Gastrocnemius medialis (tissue), 4 donors: ENCODE measurements at regions of chr11 and their contacts with region 1.

Region 1: DNA sequence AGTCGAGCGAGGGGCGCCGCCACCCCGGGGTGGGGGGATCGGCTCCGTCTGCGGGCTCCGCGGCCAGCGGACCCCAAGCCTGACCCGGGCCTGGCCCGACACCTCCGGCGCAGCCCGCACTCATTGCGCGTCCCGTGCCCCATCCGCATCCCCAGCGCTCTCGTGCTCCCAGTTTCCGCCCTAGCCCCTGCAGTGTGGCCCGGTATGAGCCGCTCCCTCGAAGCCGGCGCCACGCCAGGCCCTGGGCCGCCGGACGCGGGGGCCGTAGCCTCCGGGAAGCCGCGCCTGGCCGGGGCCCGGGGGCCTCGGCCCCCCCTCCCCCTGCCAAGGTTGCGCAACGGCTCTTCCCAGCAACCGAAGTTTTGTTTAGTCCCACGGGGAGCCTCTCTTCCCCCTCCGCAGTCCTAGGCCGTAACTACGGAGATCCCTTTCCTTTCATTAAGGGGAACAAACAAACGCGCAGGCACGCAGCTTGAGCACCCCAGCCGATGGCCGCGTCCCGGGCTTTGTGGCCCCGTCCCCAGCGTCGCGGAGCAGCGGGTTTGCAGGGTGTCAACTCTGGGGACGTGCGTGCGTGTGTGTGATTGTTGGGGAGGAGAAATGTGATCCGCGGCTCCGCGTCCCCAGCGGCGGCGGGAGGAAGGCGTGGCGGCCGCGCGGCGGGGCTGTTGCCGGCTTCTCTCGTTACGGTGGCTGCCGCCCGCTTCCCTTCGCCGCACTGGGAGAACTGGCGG is 883 bp downstream of the HIPK3 start:
- DNase-seq: peak; percentile 74 to 86
- ATAC-seq: peak; percentile 71 to 73
- H3K4me3 ChIP-seq: peak overlapping the region; percentile 70 to 96 (median 90)
- H3K27ac ChIP-seq: peak overlapping the region; percentile 97 to 100 (median 100)
- H3K4me1 ChIP-seq: peaks cover 33 to 36% of the 10 kb centered on the region in 2 donors
- H3K27me3 ChIP-seq: no peaks in the 10 kb centered on the region
- CTCF ChIP-seq: peak; percentile 33 to 60 (median 43)
- POLR2A ChIP-seq: peak; percentile 81 to 84

Region 2: GRCh38 chr11:32893343-32894148 is 364.5 kb before region 1 on chr11:
- in situ Hi-C with region 1: no loop called
- intact Hi-C with region 1: loop called (anchors 5 kb)
- DNase-seq: peak; percentile 7 to 25
- ATAC-seq: peak; percentile 60 to 63
- H3K4me3 ChIP-seq: peak overlapping the region; percentile 78 to 96 (median 89)
- H3K27ac ChIP-seq: peak overlapping the region; percentile 81 to 92 (median 90)
- H3K4me1 ChIP-seq: peaks cover 18 to 19% of the 10 kb centered on the region in 2 donors
- H3K27me3 ChIP-seq: no peaks in the 10 kb centered on the region
- CTCF ChIP-seq: peak; percentile 4 to 62 (median 27)
- POLR2A ChIP-seq: no peak

Region 3: DNA sequence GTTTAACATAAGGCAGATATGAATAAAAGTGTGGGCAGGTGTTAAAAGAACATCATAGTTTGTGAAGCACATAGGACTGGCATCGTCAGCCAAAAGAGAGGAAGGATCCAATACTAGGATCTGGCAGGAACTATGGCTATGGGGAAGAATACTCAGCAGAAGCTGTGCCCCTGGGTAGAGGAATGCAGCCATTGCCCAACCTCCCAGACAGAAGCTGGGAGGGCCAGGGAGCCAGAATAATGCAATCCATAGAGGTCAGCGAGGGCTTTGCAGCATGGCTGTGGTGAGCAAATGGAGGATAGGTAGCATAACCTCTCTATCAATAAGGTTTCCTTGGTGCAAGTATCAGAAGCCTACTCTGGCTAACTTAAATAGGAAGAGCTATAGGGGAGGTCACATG is 85.1 kb before region 1 on chr11:
- in situ Hi-C with region 1: loop called in 2 of 4 experiments (anchors 5 to 10 kb)
- intact Hi-C with region 1: no loop called
- DNase-seq: peak in 1 of 2 donors; percentile 52
- ATAC-seq: peak; percentile 65 to 97
- H3K4me3 ChIP-seq: no peak overlapping the region
- H3K27ac ChIP-seq: peak overlapping the region in 2 of 4 donors; percentile 6 to 48
- H3K4me1 ChIP-seq: peaks cover 0 to 9% of the 10 kb centered on the region in 2 donors
- H3K27me3 ChIP-seq: no peaks in the 10 kb centered on the region
- CTCF ChIP-seq: no peak
- POLR2A ChIP-seq: no peak

Region 4: DNA sequence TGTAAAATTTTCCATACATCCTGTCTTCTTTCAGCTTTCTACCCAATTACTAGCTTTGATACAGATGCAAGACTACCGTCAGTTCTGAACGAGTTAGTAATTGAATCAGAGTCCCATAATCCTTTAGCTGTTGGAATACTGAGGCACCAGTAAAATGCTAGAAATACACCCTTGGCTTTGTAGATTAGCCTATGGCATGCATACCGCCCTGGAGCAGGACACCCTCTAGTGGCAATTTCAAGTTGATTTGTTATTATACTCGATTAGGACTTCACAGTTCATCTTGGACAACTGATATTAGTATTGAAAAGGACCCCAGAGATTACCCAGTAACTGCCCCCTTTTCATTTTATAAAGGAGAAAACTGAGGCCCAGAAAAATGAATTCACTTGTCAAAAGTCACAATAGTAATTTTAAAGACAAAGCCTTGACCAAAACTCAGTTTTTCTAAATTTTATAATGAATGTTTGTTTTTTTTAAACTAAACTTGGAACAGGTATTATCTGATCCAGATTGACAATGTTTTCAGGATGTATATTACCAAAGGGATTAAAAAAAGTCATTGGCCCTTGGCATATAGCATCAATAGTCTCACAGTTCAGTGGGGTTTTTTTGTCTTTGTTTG is 71.8 kb after region 1 on chr11:
- in situ Hi-C with region 1: loop called in 3 of 4 experiments (anchors 5 kb)
- intact Hi-C with region 1: loop called (anchors 1 kb)
- DNase-seq: peak; percentile 27 to 43
- ATAC-seq: peak; percentile 74 to 90
- H3K4me3 ChIP-seq: no peak overlapping the region
- H3K27ac ChIP-seq: peak overlapping the region in 3 of 4 donors; percentile 4 to 47 (median 11)
- H3K4me1 ChIP-seq: peaks cover 84 to 87% of the 10 kb centered on the region in 2 donors
- H3K27me3 ChIP-seq: no peaks in the 10 kb centered on the region
- CTCF ChIP-seq: peak; percentile 57 to 72 (median 64)
- POLR2A ChIP-seq: no peak

Region 5: GRCh38 chr11:33700425-33701271 is 442.6 kb after region 1 on chr11 and contains the start of gene C11orf91:
- in situ Hi-C with region 1: loop called in 1 of 4 experiments (anchors 25 kb)
- intact Hi-C with region 1: loop called (anchors 10 kb)
- DNase-seq: peak; percentile 89
- ATAC-seq: peak; percentile 55 to 62
- H3K4me3 ChIP-seq: peak within 1 kb of the TSS; percentile 55 to 60 (median 59)
- H3K27ac ChIP-seq: peak within 1 kb of the TSS; percentile 84 to 99 (median 85)
- H3K4me1 ChIP-seq: peaks cover 45 to 63% of the 10 kb centered on the region in 2 donors
- H3K27me3 ChIP-seq: no peaks in the 10 kb centered on the region
- CTCF ChIP-seq: no peak
- POLR2A ChIP-seq: peak; percentile 47 to 56
- total RNA-seq, gene C11orf91: not detected

Region 6: DNA sequence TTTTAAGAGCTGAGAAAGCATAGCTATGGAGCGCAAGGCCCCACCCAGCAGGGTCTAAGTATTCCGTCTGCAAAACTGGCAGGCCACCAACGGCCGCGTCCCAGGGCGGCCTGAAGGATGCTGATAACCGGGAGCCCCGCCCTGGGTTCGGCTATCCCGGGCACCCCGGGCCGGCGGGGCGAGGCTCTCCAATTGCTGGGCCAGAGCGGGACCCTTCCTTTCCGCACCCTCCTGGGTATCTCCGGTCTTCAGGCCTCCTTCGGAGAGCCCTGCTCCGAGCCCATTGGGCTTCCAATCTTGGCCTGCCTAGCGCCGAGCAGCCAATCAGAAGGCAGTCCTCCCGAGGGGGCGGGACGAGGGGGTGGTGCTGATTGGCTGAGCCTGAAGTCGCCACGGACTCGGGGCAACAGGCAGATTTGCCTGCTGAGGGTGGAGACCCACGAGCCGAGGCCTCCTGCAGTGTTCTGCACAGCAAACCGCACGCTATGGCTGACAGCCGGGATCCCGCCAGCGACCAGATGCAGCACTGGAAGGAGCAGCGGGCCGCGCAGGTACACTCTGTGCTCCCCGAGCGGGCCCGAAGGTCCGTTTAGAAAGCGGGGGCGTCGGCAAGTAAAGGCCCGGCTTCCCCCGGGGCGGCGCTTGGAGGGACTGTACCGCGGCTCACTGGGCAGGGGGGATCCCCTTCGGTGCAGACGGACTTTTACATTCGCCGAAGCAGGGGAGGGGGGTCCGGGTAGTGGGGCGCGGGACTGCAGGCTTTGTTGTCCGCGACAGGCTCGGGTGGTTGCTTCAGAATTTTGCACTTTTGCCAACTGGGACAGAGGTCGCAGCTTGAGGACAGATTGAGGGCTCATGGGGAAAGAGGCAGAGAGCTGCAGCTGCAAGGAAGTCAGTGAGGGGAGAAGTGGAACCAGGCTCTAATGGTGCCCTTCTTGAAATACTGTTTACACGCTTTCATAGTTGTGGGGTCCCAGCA is 1180.8 kb after region 1 on chr11 and contains the start of gene CAT:
- in situ Hi-C with region 1: no loop called
- intact Hi-C with region 1: loop called (anchors 2 kb)
- DNase-seq: peak; percentile 98
- ATAC-seq: peak; percentile 96
- H3K4me3 ChIP-seq: peak within 1 kb of the TSS; percentile 85 to 98 (median 89)
- H3K27ac ChIP-seq: peak within 1 kb of the TSS; percentile 95 to 96 (median 96)
- H3K4me1 ChIP-seq: peaks cover 25 to 50% of the 10 kb centered on the region in 2 donors
- H3K27me3 ChIP-seq: no peaks in the 10 kb centered on the region
- CTCF ChIP-seq: no peak
- POLR2A ChIP-seq: peak; percentile 78 to 79
- total RNA-seq, gene CAT: 107 to 150 (median 128) TPM